GM12878 (cell line): ENCODE measurements at regions of chr10 and their contacts with region 1.

Region 1: GRCh38 chr10:18472977-18473376 is 178.4 kb downstream of the NSUN6 start:
- DNase-seq: no peak
- ATAC-seq: peak; percentile 70
- H3K4me3 ChIP-seq: no peak overlapping the region
- H3K27ac ChIP-seq: no peak overlapping the region
- H3K4me1 ChIP-seq: no peaks in the 10 kb centered on the region
- H3K27me3 ChIP-seq: no peaks in the 10 kb centered on the region
- CTCF ChIP-seq: peak; percentile 21 to 43 (median 32); a peak in 4 of 6 replicates
- EP300 ChIP-seq: no peak
- POLR2A ChIP-seq: no peak
- RAD21 ChIP-seq: no peak

Region 2: DNA sequence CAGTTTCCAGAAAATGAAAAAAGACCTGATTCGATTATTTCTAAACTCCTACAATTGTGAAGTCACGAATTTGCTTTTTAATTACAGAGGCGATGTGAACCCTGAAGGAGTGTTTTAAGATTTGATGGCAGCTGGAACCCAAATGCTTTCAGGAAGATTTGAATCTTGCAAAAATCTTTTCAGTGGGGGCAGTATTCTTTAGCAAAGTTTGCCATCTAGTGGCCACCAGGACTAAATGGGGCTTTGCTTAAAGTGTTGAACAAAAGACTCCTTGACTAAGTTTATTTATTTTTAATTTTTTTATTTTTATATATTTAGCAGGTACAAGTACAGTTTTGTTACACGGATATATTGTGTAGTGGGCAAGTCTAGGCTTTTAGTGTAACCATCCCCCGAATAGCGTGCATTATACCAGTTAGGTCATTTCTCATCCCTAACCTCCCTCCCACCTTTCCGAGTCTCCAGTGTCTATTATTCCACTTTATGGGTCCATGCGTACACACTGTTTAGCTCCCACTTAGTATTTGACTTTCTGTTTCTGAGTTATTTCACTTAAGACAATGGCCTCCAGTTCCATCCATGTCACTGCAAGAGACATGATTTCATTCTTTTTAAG is 234.0 kb before region 1 on chr10:
- CTCF ChIA-PET with region 1: interaction called, 4 read pairs
- POLR2A ChIA-PET with region 1: no interaction called
- RAD21 ChIA-PET with region 1: interaction called, 14 read pairs
- SMC1A ChIA-PET with region 1: interaction called, 8 read pairs
- in situ Hi-C with region 1: no loop called
- intact Hi-C with region 1: loop called (anchors 10 kb)
- DNase-seq: no peak
- ATAC-seq: peak; percentile 66
- H3K4me3 ChIP-seq: no peak overlapping the region
- H3K27ac ChIP-seq: no peak overlapping the region
- H3K4me1 ChIP-seq: no peaks in the 10 kb centered on the region
- H3K27me3 ChIP-seq: peaks cover 0 to 3% of the 10 kb centered on the region in 2 experiments; a peak in 2 of 4 replicates
- CTCF ChIP-seq: peak; percentile 51 to 68 (median 58); a peak in 5 of 6 replicates
- EP300 ChIP-seq: no peak
- POLR2A ChIP-seq: no peak
- RAD21 ChIP-seq: peak; percentile 77

Region 3: GRCh38 chr10:18319628-18320027 is 153.3 kb before region 1 on chr10:
- CTCF ChIA-PET with region 1: interaction called, 40 read pairs
- POLR2A ChIA-PET with region 1: no interaction called
- RAD21 ChIA-PET with region 1: interaction called, 20 read pairs
- SMC1A ChIA-PET with region 1: interaction called, 20 read pairs
- in situ Hi-C with region 1: no loop called
- intact Hi-C with region 1: loop called (anchors 5 kb)
- DNase-seq: no peak
- ATAC-seq: peak; percentile 60
- H3K4me3 ChIP-seq: no peak overlapping the region
- H3K27ac ChIP-seq: no peak overlapping the region
- H3K4me1 ChIP-seq: no peaks in the 10 kb centered on the region
- H3K27me3 ChIP-seq: no peaks in the 10 kb centered on the region
- CTCF ChIP-seq: no peak
- EP300 ChIP-seq: no peak
- POLR2A ChIP-seq: no peak
- RAD21 ChIP-seq: no peak

Region 4: DNA sequence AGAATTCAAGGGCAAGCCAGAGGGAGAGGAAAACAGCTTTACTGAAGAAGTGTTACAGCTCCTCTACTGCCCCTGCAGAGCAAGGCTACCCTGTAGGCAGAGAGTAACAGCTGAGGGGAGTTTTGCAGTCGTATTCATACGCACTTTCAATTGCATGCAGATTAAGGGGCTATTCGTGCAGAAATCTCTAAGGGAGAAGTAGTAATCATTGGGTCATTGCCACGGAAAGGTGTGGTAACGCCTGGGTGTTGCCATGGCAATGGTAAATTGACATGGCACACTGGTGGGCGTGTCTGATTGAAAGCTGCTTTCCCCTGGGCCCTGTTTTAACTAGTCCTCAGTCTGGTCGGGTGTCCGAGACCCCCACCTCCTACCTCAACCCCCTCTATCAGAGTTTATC is 48.8 kb before region 1 on chr10:
- CTCF ChIA-PET with region 1: interaction called, 22 read pairs
- POLR2A ChIA-PET with region 1: interaction called, 5 read pairs
- RAD21 ChIA-PET with region 1: interaction called, 17 read pairs
- SMC1A ChIA-PET with region 1: interaction called, 50 read pairs
- in situ Hi-C with region 1: no loop called
- intact Hi-C with region 1: loop called (anchors 5 kb)
- DNase-seq: no peak
- ATAC-seq: peak; percentile 81
- H3K4me3 ChIP-seq: no peak overlapping the region
- H3K27ac ChIP-seq: no peak overlapping the region
- H3K4me1 ChIP-seq: no peaks in the 10 kb centered on the region
- H3K27me3 ChIP-seq: no peaks in the 10 kb centered on the region
- CTCF ChIP-seq: no peak
- EP300 ChIP-seq: peak; percentile 37 to 63; a peak in 2 of 4 replicates
- POLR2A ChIP-seq: no peak
- RAD21 ChIP-seq: no peak

Region 5: DNA sequence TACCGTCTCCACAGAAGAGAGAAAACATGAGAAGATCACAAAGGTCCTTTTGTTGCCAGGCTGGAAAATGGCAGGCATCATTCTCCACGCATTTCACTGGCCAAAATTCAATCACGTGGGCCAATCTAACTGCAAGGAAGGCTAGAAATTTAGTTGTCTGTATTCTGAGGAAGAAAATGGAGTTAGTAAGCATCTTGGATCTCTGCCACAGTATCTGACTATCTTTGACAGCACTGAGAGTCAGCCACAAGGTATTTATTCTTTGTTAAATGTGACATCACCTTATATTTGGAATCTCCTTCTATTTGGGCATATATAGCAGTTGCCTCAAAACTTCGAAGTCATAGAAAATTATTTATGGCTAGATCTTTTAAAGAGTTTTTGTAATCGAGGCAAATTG is 35.5 kb before region 1 on chr10:
- CTCF ChIA-PET with region 1: interaction called, 15 read pairs
- POLR2A ChIA-PET with region 1: no interaction called
- RAD21 ChIA-PET with region 1: interaction called, 10 read pairs
- SMC1A ChIA-PET with region 1: interaction called, 10 read pairs
- in situ Hi-C with region 1: no loop called
- intact Hi-C with region 1: no loop called
- DNase-seq: no peak
- ATAC-seq: no peak
- H3K4me3 ChIP-seq: no peak overlapping the region
- H3K27ac ChIP-seq: no peak overlapping the region
- H3K4me1 ChIP-seq: no peaks in the 10 kb centered on the region
- H3K27me3 ChIP-seq: no peaks in the 10 kb centered on the region
- CTCF ChIP-seq: no peak
- EP300 ChIP-seq: no peak
- POLR2A ChIP-seq: no peak
- RAD21 ChIP-seq: no peak

Region 6: DNA sequence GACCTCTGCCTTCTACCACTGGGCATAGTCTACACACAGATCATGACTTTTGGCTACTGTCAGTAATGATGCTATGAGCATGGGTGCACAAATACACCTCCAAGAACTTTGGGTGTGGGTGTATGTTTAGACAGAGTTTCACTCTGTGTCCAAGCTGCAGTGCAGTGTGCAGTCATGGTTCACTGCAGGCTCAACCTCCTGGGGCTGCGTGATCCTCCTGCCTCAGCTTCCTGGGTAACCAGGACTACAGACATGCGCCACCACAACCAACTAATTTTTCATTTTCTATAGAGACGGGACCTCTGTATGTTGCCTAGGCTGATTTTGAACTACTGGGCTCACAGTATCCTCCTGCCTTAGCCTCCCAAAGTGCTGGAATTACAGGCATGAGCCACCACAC is 16.0 kb before region 1 on chr10:
- CTCF ChIA-PET with region 1: interaction called, 6 read pairs
- POLR2A ChIA-PET with region 1: interaction called, 3 read pairs
- RAD21 ChIA-PET with region 1: interaction called, 20 read pairs
- SMC1A ChIA-PET with region 1: interaction called, 20 read pairs
- in situ Hi-C with region 1: no loop called
- intact Hi-C with region 1: no loop called
- DNase-seq: peak; percentile 55
- ATAC-seq: peak; percentile 99
- H3K4me3 ChIP-seq: no peak overlapping the region
- H3K27ac ChIP-seq: no peak overlapping the region
- H3K4me1 ChIP-seq: peaks cover 4% of the 10 kb centered on the region; the same call in 1 of the 2 replicates
- H3K27me3 ChIP-seq: no peaks in the 10 kb centered on the region
- CTCF ChIP-seq: no peak
- EP300 ChIP-seq: peak; percentile 17 to 73; a peak in 3 of 4 replicates
- POLR2A ChIP-seq: no peak
- RAD21 ChIP-seq: no peak

Region 7: GRCh38 chr10:18523025-18523424 is 50.0 kb after region 1 on chr10:
- CTCF ChIA-PET with region 1: no interaction called
- POLR2A ChIA-PET with region 1: no interaction called
- RAD21 ChIA-PET with region 1: no interaction called
- SMC1A ChIA-PET with region 1: no interaction called
- in situ Hi-C with region 1: no loop called
- intact Hi-C with region 1: no loop called
- DNase-seq: no peak
- ATAC-seq: no peak
- H3K4me3 ChIP-seq: no peak overlapping the region
- H3K27ac ChIP-seq: no peak overlapping the region
- H3K4me1 ChIP-seq: no peaks in the 10 kb centered on the region
- H3K27me3 ChIP-seq: no peaks in the 10 kb centered on the region
- CTCF ChIP-seq: no peak
- EP300 ChIP-seq: no peak
- POLR2A ChIP-seq: no peak
- RAD21 ChIP-seq: no peak

Region 8: GRCh38 chr10:19250546-19250945 is 777.6 kb after region 1 on chr10:
- CTCF ChIA-PET with region 1: no interaction called
- POLR2A ChIA-PET with region 1: no interaction called
- RAD21 ChIA-PET with region 1: no interaction called
- SMC1A ChIA-PET with region 1: no interaction called
- in situ Hi-C with region 1: no loop called
- intact Hi-C with region 1: no loop called
- DNase-seq: no peak
- ATAC-seq: peak; percentile 41
- H3K4me3 ChIP-seq: no peak overlapping the region
- H3K27ac ChIP-seq: no peak overlapping the region
- H3K4me1 ChIP-seq: no peaks in the 10 kb centered on the region
- H3K27me3 ChIP-seq: no peaks in the 10 kb centered on the region
- CTCF ChIP-seq: no peak
- EP300 ChIP-seq: no peak
- POLR2A ChIP-seq: no peak
- RAD21 ChIP-seq: no peak